ENCODE measurements at regions of chr22 and their contacts with region 1.

Region 1: DNA sequence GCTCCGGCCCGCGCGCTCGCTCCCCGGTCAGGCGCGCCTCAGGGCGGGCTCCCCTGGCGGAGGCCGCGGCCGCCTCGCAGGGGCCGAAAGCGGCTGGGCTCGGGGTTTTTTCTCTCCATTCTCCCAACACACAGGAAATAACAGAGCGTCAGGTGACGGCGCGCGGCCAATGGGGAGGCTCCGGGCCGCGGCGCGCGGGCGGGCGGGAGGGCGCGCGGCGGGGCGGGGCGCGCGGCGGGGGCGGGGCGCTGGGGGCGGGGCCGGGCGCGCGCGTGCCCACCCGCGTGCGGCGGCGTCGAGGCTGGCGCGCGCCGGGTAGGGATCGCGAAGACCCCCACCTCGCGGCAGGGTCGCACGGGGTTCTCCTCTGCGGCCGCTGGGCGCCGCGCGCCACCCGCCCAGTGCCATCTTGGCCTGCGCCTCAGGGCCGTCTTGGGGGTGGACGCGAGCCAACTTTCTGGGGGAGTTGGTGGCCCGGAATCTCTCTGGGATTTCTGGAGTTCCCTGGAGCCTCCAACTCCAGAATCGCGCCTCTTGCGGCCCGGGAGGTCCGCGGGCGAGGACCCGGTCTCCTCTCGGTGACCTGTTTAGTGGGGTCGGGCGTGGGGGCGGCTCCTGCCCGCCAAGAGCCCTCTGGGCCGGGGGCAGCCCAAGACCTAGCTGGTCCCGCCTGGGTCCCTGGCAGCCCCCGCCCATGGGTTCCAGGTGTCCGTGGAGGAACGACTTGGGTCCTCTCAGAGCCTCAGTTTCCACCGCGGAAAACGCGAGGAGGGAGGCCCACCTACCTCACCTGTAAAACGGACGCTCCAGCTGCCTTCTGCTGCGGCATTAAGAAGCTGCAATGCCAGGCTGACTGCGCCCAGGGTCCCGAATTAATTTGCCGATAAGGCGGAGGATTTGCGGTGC is at the start of gene TCF20:
- DNase-seq: peak in 1 of 2 experiments; percentile 78
- H3K4me3 ChIP-seq: peak within 1 kb of the TSS; percentile 77 to 86 (median 83)
- H3K27ac ChIP-seq: peak within 1 kb of the TSS; percentile 72; the same call in 1 of the 2 replicates
- H3K4me1 ChIP-seq: peaks cover 21 to 31% (median 23%) of the 10 kb centered on the region in 4 experiments
- H3K27me3 ChIP-seq: peaks cover 0 to 8% (median 4%) of the 10 kb centered on the region in 4 experiments; a peak in 4 of 7 replicates
- CTCF ChIP-seq: 0 out of 4 replicates have a peak, but pooled peaks of 1 of the 3 experiments have one; percentile 3
- EP300 ChIP-seq: no peak
- POLR2A ChIP-seq: no peak
- RAD21 ChIP-seq: peak; percentile 12 to 34; a peak in 2 of 4 replicates
- total RNA-seq, gene TCF20: 79.8 and 80.4 TPM in 2 replicates

Region 2: GRCh38 chr22:42283278-42284201 is 12.8 kb after region 1 on chr22:
- CTCF ChIA-PET with region 1: interaction called, 12 read pairs
- POLR2A ChIA-PET with region 1: interaction called, 6 read pairs
- DNase-seq: peak in 1 of 2 experiments; percentile 71
- H3K4me3 ChIP-seq: peak overlapping the region; percentile 4 to 56 (median 38)
- H3K27ac ChIP-seq: no peak overlapping the region
- H3K4me1 ChIP-seq: peaks cover 0 to 17% (median 11%) of the 10 kb centered on the region in 4 experiments; a peak in 6 of 7 replicates
- H3K27me3 ChIP-seq: peaks cover 0 to 55% (median 39%) of the 10 kb centered on the region in 4 experiments; a peak in 6 of 7 replicates
- CTCF ChIP-seq: no peak
- EP300 ChIP-seq: no peak
- POLR2A ChIP-seq: no peak
- RAD21 ChIP-seq: no peak

Measured in H1 (cell line).